GM12878 (cell line): ENCODE measurements at regions of chr5 and their contacts with region 1.

Region 1: DNA sequence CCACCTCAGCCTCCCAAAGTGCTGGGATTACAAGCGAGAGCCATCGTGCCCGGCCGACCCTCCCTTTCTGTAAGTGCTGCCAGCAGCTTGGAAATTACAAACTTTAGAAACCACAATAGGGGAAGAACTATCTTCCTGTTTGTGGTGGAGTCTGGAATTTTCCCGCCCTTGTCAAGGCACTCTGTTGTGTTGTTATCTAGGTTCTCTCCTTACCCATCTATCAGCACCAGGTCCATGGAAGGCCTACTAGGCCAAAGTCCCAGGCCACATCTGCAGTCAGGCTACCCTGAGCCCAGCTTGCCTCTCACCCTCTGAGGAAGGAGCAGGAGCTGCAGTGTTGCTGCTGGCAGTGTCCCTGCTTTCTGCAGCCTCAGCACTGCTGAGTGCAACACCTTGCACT is 214.9 kb downstream of the MCTP1 start:
- DNase-seq: no peak
- ATAC-seq: peak; percentile 42
- H3K4me3 ChIP-seq: no peak overlapping the region; the same call in 1 of the 2 replicates
- H3K27ac ChIP-seq: peak overlapping the region; percentile 30; the same call in 1 of the 2 replicates
- H3K4me1 ChIP-seq: peaks cover 44% of the 10 kb centered on the region
- H3K27me3 ChIP-seq: no peaks in the 10 kb centered on the region
- CTCF ChIP-seq: no peak
- EP300 ChIP-seq: no peak
- POLR2A ChIP-seq: no peak
- RAD21 ChIP-seq: no peak

Region 2: DNA sequence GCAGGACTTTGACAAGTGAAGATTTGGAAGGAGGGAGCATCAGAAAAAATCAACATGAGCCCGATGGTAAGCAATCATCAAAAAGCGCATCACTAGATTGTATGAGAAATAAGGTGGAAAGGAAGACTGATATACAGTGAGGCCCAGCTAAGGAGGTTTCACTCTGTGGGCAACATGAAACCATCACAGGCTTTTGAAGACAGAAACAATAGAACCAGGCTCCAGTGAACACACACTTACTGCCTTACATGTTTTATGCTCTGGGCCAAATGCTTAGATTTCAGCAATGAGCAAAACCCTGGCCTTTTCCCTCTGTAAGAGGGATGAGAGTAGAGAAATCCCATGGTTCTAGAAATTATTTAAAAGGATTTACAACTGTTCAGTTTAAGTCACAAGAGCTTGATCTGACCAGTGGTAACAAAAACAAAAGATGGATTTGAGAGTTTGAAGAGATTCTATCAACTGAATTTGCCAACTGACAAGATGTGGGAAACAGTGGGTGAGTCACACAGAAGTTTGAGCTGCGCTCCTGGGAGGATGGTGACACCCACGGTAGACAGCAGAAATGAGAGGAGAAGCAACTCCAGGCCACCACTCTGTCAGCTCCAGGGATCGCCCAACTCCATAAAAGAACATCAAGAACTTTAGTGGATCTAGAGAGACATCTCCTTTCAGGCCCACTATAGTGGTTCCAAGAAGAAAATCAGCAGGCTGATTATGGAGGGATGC is 46.8 kb before region 1 on chr5:
- CTCF ChIA-PET with region 1: interaction called, 10 read pairs
- POLR2A ChIA-PET with region 1: interaction called, 5 read pairs
- RAD21 ChIA-PET with region 1: interaction called, 8 read pairs
- SMC1A ChIA-PET with region 1: interaction called, 64 read pairs
- in situ Hi-C with region 1: no loop called
- intact Hi-C with region 1: no loop called
- DNase-seq: peak; percentile 66
- ATAC-seq: peak; percentile 89
- H3K4me3 ChIP-seq: peak overlapping the region; percentile 32; the same call in 1 of the 2 replicates
- H3K27ac ChIP-seq: peak overlapping the region; percentile 40
- H3K4me1 ChIP-seq: peaks cover 30% of the 10 kb centered on the region
- H3K27me3 ChIP-seq: no peaks in the 10 kb centered on the region
- CTCF ChIP-seq: no peak
- EP300 ChIP-seq: no peak
- POLR2A ChIP-seq: no peak
- RAD21 ChIP-seq: no peak

Region 3: GRCh38 chr5:95050708-95051107 is 19.2 kb before region 1 on chr5:
- CTCF ChIA-PET with region 1: interaction called, 8 read pairs
- POLR2A ChIA-PET with region 1: interaction called, 6 read pairs
- RAD21 ChIA-PET with region 1: interaction called, 14 read pairs
- SMC1A ChIA-PET with region 1: interaction called, 62 read pairs
- in situ Hi-C with region 1: no loop called
- intact Hi-C with region 1: no loop called
- DNase-seq: no peak
- ATAC-seq: peak; percentile 10; the same call in 2 of the 3 replicates
- H3K4me3 ChIP-seq: no peak overlapping the region
- H3K27ac ChIP-seq: no peak overlapping the region
- H3K4me1 ChIP-seq: no peaks in the 10 kb centered on the region
- H3K27me3 ChIP-seq: no peaks in the 10 kb centered on the region
- CTCF ChIP-seq: no peak
- EP300 ChIP-seq: no peak
- POLR2A ChIP-seq: no peak
- RAD21 ChIP-seq: no peak

Region 4: GRCh38 chr5:95087816-95088317 is 17.9 kb after region 1 on chr5:
- CTCF ChIA-PET with region 1: interaction called, 25 read pairs
- POLR2A ChIA-PET with region 1: interaction called, 16 read pairs
- RAD21 ChIA-PET with region 1: interaction called, 86 read pairs
- SMC1A ChIA-PET with region 1: interaction called, 28 read pairs
- in situ Hi-C with region 1: no loop called
- intact Hi-C with region 1: no loop called
- DNase-seq: peak; percentile 85
- ATAC-seq: peak; percentile 90
- H3K4me3 ChIP-seq: peak overlapping the region; percentile 20; the same call in 1 of the 2 replicates
- H3K27ac ChIP-seq: peak overlapping the region; percentile 88
- H3K4me1 ChIP-seq: peaks cover 16% of the 10 kb centered on the region
- H3K27me3 ChIP-seq: no peaks in the 10 kb centered on the region
- CTCF ChIP-seq: no peak
- EP300 ChIP-seq: peak; percentile 83 to 86; a peak in 3 of 4 replicates
- POLR2A ChIP-seq: no peak
- RAD21 ChIP-seq: no peak